CD4-positive, alpha-beta T cell (primary cell): ENCODE measurements at regions of chr17 and their contacts with region 1.

Region 1: DNA sequence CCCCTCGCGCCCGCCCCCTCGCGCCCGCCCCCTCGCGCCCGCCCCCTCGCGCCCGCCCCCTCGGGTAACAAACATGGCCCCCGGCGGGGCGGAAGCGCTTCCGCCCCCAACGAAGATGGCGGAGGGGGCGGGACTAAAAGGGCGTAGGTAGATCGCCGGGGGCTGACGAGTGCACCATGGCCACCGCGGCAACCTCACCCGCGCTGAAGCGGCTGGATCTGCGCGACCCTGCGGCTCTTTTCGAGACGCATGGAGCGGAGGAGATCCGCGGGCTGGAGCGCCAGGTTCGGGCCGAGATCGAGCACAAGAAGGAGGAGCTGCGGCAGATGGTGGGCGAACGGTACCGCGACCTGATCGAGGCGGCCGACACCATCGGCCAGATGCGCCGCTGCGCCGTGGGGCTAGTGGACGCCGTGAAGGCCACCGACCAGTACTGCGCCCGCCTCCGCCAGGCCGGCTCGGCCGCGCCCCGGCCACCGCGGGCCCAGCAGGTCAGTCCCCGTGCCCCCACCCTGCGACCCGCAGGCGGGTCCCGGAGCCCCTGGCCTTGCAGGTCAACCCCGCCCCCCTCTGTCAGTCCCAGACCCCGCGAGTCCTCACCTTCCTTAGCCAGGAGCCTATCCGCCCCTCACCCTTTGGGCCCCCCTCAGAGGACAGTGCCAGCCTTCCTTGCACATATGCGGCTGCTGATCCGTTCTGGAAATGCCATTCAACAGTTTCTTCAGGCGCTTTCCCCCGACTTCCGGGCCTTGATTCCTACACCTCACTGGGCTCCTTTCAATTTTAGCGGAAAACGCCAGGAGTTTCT is at the start of gene COG1:
- DNase-seq: peak; percentile 63 to 95 (median 84)
- ATAC-seq: peak; percentile 84
- H3K4me3 ChIP-seq: peak within 1 kb of the TSS; percentile 89
- H3K4me3 Mint-ChIP-seq: peak within 1 kb of the TSS; percentile 99
- H3K27ac ChIP-seq: peak within 1 kb of the TSS; percentile 60 to 75
- H3K27ac Mint-ChIP-seq: peak within 1 kb of the TSS; percentile 89
- H3K4me1 ChIP-seq: peaks cover 28% of the 10 kb centered on the region
- H3K4me1 Mint-ChIP-seq: peaks cover 33% of the 10 kb centered on the region
- H3K27me3 ChIP-seq: no peaks in the 10 kb centered on the region
- H3K27me3 Mint-ChIP-seq: no peaks in the 10 kb centered on the region
- CTCF ChIP-seq: no peak
- total RNA-seq, gene COG1: 83.0 to 86.2 TPM

Region 2: GRCh38 chr17:73092523-73093135 is 100.5 kb before region 1 on chr17 and contains the start of gene SLC39A11:
- CTCF ChIA-PET with region 1: interaction called, 3 read pairs
- POLR2A ChIA-PET with region 1: no interaction called
- intact Hi-C with region 1: loop called in 1 of 2 experiments (anchors 2 kb)
- DNase-seq: peak; percentile 72 to 95 (median 87)
- ATAC-seq: peak; percentile 96
- H3K4me3 ChIP-seq: peak within 1 kb of the TSS; percentile 77
- H3K4me3 Mint-ChIP-seq: peak within 1 kb of the TSS; percentile 91
- H3K27ac ChIP-seq: peak within 1 kb of the TSS in 1 of 2 donors; percentile 18
- H3K27ac Mint-ChIP-seq: peak within 1 kb of the TSS; percentile 80
- H3K4me1 ChIP-seq: peaks cover 24% of the 10 kb centered on the region
- H3K4me1 Mint-ChIP-seq: peaks cover 36% of the 10 kb centered on the region
- H3K27me3 ChIP-seq: peaks cover 0 to 4% of the 10 kb centered on the region in 2 experiments
- H3K27me3 Mint-ChIP-seq: no peaks in the 10 kb centered on the region
- CTCF ChIP-seq: no peak
- total RNA-seq, gene SLC39A11: 9.7 to 12.2 TPM

Region 3: DNA sequence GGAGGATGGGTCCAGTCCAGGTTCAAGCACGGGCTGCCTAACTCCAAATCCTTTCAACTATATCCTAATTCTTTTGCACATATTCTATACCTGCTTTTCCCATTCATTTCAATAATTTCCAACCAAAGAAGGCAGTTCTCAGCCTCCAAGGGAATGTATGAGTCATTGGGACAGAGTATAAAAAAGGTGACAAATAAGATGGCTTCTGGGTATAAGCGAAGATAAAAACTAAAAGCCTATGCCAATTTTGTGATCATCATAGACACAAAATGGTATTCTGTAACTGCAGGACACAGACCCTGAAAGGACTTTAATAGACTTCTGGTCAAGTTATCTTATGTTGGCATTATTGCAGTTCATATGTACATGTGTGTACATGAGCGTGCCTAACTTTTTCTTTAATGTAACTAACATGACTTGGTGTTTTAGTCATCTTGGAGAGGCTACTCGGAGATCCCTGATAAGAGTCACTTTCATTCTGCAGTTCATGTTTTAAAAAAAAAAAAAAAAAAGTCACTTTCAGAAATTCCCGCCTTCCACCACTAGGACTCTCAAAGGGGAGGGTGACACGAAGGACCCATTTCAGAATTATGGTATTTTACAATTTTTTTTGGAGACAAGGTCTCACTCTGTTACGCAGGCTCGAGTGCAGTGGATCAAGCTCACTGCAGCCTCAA is 17.0 kb after region 1 on chr17:
- CTCF ChIA-PET with region 1: no interaction called
- POLR2A ChIA-PET with region 1: interaction called, 18 read pairs
- intact Hi-C with region 1: loop called (anchors 2 kb)
- DNase-seq: peak in 2 of 14 experiments; percentile 48 to 50
- ATAC-seq: peak; percentile 37
- H3K4me3 ChIP-seq: no peak overlapping the region
- H3K4me3 Mint-ChIP-seq: peak overlapping the region; percentile 20
- H3K27ac ChIP-seq: peak overlapping the region in 1 of 2 donors; percentile 0
- H3K27ac Mint-ChIP-seq: peak overlapping the region; percentile 86
- H3K4me1 ChIP-seq: peaks cover 19% of the 10 kb centered on the region
- H3K4me1 Mint-ChIP-seq: peaks cover 39% of the 10 kb centered on the region
- H3K27me3 ChIP-seq: no peaks in the 10 kb centered on the region
- H3K27me3 Mint-ChIP-seq: no peaks in the 10 kb centered on the region
- CTCF ChIP-seq: no peak

Region 4: DNA sequence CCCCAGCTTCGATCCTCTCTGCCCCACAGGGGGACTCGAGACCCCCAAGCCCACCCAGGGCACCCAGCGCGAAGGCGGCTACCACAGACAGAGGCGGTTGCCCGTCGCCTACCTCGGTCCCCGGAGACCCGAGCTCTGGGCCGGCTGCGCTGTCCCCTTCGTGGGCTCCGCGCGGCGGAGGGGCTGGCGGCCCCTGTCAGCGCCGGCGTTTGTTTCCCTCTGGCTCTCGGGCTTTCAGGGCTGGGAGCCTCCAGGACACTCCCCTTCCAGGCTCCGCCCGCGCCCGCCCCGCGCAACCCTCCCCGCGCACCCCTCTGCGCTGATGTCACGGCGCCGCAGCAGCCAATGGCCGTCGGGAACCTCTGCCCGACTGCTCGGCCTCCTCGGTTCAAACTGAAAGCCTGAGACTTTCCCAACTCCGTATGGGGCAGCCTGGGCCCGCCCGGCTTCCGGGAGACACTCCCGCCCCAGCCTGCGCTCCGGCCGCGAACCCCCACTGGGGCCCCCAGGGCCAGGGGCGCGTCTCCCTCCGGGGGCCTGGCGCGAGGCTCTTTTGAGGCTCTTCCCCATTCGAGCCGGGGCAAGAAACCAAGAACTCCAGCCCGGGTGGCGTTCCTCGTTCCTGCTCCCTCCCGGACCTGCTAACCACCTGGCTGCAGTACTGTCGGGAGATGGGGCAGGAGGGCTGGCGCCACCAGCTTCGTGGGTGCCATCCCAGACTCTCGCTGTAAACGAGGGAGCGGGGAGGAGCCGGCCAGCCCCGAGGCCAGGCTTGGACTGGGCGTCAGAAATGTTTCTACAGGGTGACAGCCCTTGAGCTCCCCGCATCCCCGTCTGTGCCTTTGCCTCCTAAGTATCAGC is 118.9 kb after region 1 on chr17 and contains the start of gene CDC42EP4:
- CTCF ChIA-PET with region 1: interaction called, 3 read pairs
- POLR2A ChIA-PET with region 1: no interaction called
- intact Hi-C with region 1: loop called (anchors 2 to 10 kb)
- DNase-seq: peak; percentile 70 to 92 (median 82)
- ATAC-seq: peak; percentile 90
- H3K4me3 ChIP-seq: peak within 1 kb of the TSS; percentile 62
- H3K4me3 Mint-ChIP-seq: peak within 1 kb of the TSS; percentile 92
- H3K27ac ChIP-seq: peak within 1 kb of the TSS; percentile 33 to 56
- H3K27ac Mint-ChIP-seq: peak within 1 kb of the TSS; percentile 47
- H3K4me1 ChIP-seq: peaks cover 30% of the 10 kb centered on the region
- H3K4me1 Mint-ChIP-seq: peaks cover 8% of the 10 kb centered on the region
- H3K27me3 ChIP-seq: no peaks in the 10 kb centered on the region
- H3K27me3 Mint-ChIP-seq: no peaks in the 10 kb centered on the region
- CTCF ChIP-seq: no peak
- total RNA-seq, gene CDC42EP4: 2.9 to 3.5 TPM

Region 5: GRCh38 chr17:73371285-73371684 is 178.2 kb after region 1 on chr17:
- CTCF ChIA-PET with region 1: no interaction called
- POLR2A ChIA-PET with region 1: no interaction called
- intact Hi-C with region 1: loop called (anchors 1 kb)
- DNase-seq: no peak
- ATAC-seq: no peak
- H3K4me3 ChIP-seq: no peak overlapping the region
- H3K4me3 Mint-ChIP-seq: no peak overlapping the region
- H3K27ac ChIP-seq: no peak overlapping the region
- H3K27ac Mint-ChIP-seq: no peak overlapping the region
- H3K4me1 ChIP-seq: no peaks in the 10 kb centered on the region
- H3K4me1 Mint-ChIP-seq: no peaks in the 10 kb centered on the region
- H3K27me3 ChIP-seq: no peaks in the 10 kb centered on the region
- H3K27me3 Mint-ChIP-seq: no peaks in the 10 kb centered on the region
- CTCF ChIP-seq: no peak

Region 6: GRCh38 chr17:73939806-73940493 is 746.9 kb after region 1 on chr17:
- CTCF ChIA-PET with region 1: no interaction called
- POLR2A ChIA-PET with region 1: no interaction called
- intact Hi-C with region 1: no loop called
- DNase-seq: no peak
- ATAC-seq: no peak
- H3K4me3 ChIP-seq: no peak overlapping the region
- H3K4me3 Mint-ChIP-seq: no peak overlapping the region
- H3K27ac ChIP-seq: no peak overlapping the region
- H3K27ac Mint-ChIP-seq: no peak overlapping the region
- H3K4me1 ChIP-seq: no peaks in the 10 kb centered on the region
- H3K4me1 Mint-ChIP-seq: no peaks in the 10 kb centered on the region
- H3K27me3 ChIP-seq: peaks cover 0 to 2% of the 10 kb centered on the region in 2 experiments
- H3K27me3 Mint-ChIP-seq: peaks cover 15% of the 10 kb centered on the region
- CTCF ChIP-seq: no peak